IMR-90 (cell line): ENCODE measurements at regions of chr11 and their contacts with region 1.

Region 1: GRCh38 chr11:16613512-16614381 is 124.7 kb upstream of the C11orf58 start:
- DNase-seq: peak; percentile 83
- ATAC-seq: peak; percentile 97
- H3K4me3 ChIP-seq: peak overlapping the region; percentile 67
- H3K27ac ChIP-seq: peak overlapping the region; percentile 36
- H3K4me1 ChIP-seq: peaks cover 5% of the 10 kb centered on the region; the same call in 1 of the 2 replicates
- H3K27me3 ChIP-seq: 0 out of 2 replicates have a peak, but pooled peaks cover 2% of the 10 kb centered on the region
- CTCF ChIP-seq: peak; percentile 92
- POLR2A ChIP-seq: no peak
- RAD21 ChIP-seq: peak; percentile 96

Region 2: DNA sequence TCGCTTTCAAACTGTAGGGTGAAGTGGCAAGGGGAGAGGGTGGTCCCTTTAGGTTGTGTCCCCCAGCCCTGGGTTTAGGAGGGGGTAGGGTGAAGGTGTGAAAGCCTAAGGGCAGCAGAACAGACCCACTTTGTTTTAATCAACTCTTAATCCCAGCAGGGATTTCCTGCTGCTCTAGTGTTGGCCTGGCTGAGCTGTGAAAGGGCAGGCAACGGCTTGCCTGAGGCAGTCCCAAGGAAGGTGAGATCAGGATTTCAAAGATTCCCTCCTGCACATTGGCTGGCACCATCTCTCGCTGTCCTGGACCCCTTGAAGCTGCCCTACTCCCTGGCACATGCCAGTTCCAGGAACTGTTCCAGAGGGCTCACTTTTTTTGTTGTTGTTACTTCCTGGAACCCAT is 1277.7 kb before region 1 on chr11:
- CTCF ChIA-PET with region 1: no interaction called
- POLR2A ChIA-PET with region 1: no interaction called
- dilution Hi-C with region 1: no loop called
- in situ Hi-C with region 1: loop called (anchors 10 kb)
- intact Hi-C with region 1: no loop called
- DNase-seq: no peak
- ATAC-seq: no peak
- H3K4me3 ChIP-seq: no peak overlapping the region
- H3K27ac ChIP-seq: no peak overlapping the region
- H3K4me1 ChIP-seq: no peaks in the 10 kb centered on the region
- H3K27me3 ChIP-seq: no peaks in the 10 kb centered on the region; the same call in 1 of the 2 replicates
- CTCF ChIP-seq: no peak
- POLR2A ChIP-seq: no peak
- RAD21 ChIP-seq: no peak

Region 3: GRCh38 chr11:15826826-15827225 is 786.9 kb before region 1 on chr11:
- CTCF ChIA-PET with region 1: interaction called, 10 read pairs
- POLR2A ChIA-PET with region 1: no interaction called
- dilution Hi-C with region 1: no loop called
- in situ Hi-C with region 1: no loop called
- intact Hi-C with region 1: loop called (anchors 2 kb)
- DNase-seq: no peak
- ATAC-seq: peak; percentile 21; the same call in 1 of the 2 replicates
- H3K4me3 ChIP-seq: no peak overlapping the region
- H3K27ac ChIP-seq: no peak overlapping the region
- H3K4me1 ChIP-seq: peaks cover 20% of the 10 kb centered on the region
- H3K27me3 ChIP-seq: no peaks in the 10 kb centered on the region
- CTCF ChIP-seq: peak; percentile 47
- POLR2A ChIP-seq: no peak
- RAD21 ChIP-seq: peak; percentile 55

Region 4: GRCh38 chr11:16356057-16356760 is 257.5 kb before region 1 on chr11 and contains the start of gene SOX6:
- CTCF ChIA-PET with region 1: no interaction called
- POLR2A ChIA-PET with region 1: no interaction called
- dilution Hi-C with region 1: no loop called
- in situ Hi-C with region 1: no loop called
- intact Hi-C with region 1: no loop called
- DNase-seq: peak; percentile 67
- ATAC-seq: peak; percentile 77
- H3K4me3 ChIP-seq: no peak within 1 kb of the TSS
- H3K27ac ChIP-seq: no peak within 1 kb of the TSS
- H3K4me1 ChIP-seq: peaks cover 7% of the 10 kb centered on the region; the same call in 1 of the 2 replicates
- H3K27me3 ChIP-seq: no peaks in the 10 kb centered on the region
- CTCF ChIP-seq: no peak
- POLR2A ChIP-seq: no peak
- RAD21 ChIP-seq: no peak
- total RNA-seq, gene SOX6: 7.7 and 12.5 TPM in 2 replicates